Activated CD4-positive, alpha-beta T cell treated with anti-CD3 and anti-CD28 coated beads for 36 hours (primary cell): ENCODE measurements at regions of chr14 and their contacts with region 1.

Region 1: GRCh38 chr14:44404036-44404435 is 103.0 kb downstream of the FSCB start:
- DNase-seq: no peak
- ATAC-seq: no peak
- H3K4me3 Mint-ChIP-seq: no peak overlapping the region
- H3K27ac Mint-ChIP-seq: no peak overlapping the region
- H3K4me1 Mint-ChIP-seq: no peaks in the 10 kb centered on the region
- H3K27me3 Mint-ChIP-seq: no peaks in the 10 kb centered on the region

Region 2: GRCh38 chr14:44428231-44428935 is 24.3 kb after region 1 on chr14:
- CTCF ChIA-PET with region 1: no interaction called
- POLR2A ChIA-PET with region 1: no interaction called
- intact Hi-C with region 1: loop called in 1 of 2 experiments (anchors 1 kb)
- DNase-seq: no peak
- ATAC-seq: no peak
- H3K4me3 Mint-ChIP-seq: no peak overlapping the region
- H3K27ac Mint-ChIP-seq: no peak overlapping the region
- H3K4me1 Mint-ChIP-seq: no peaks in the 10 kb centered on the region
- H3K27me3 Mint-ChIP-seq: no peaks in the 10 kb centered on the region

Region 3: GRCh38 chr14:45150386-45150890 is 746.4 kb after region 1 on chr14:
- CTCF ChIA-PET with region 1: no interaction called
- POLR2A ChIA-PET with region 1: no interaction called
- intact Hi-C with region 1: loop called in 1 of 2 experiments (anchors 5 kb)
- DNase-seq: no peak
- ATAC-seq: no peak
- H3K4me3 Mint-ChIP-seq: no peak overlapping the region
- H3K27ac Mint-ChIP-seq: no peak overlapping the region
- H3K4me1 Mint-ChIP-seq: peaks cover under 1% of the 10 kb centered on the region
- H3K27me3 Mint-ChIP-seq: no peaks in the 10 kb centered on the region